CD4-positive, alpha-beta T cell (primary cell): ENCODE measurements at regions of chr19 and their contacts with region 1.

Region 1: GRCh38 chr19:14366498-14366915 is 14.7 kb upstream of the ADGRE5 start:
- DNase-seq: peak; percentile 86 to 98 (median 92)
- ATAC-seq: peak; percentile 58
- H3K4me3 ChIP-seq: peak overlapping the region; percentile 24
- H3K4me3 Mint-ChIP-seq: peak overlapping the region; percentile 82
- H3K27ac ChIP-seq: peak overlapping the region; percentile 97 to 99
- H3K27ac Mint-ChIP-seq: peak overlapping the region; percentile 84
- H3K4me1 ChIP-seq: peaks cover 95% of the 10 kb centered on the region
- H3K4me1 Mint-ChIP-seq: peaks cover 65% of the 10 kb centered on the region
- H3K27me3 ChIP-seq: no peaks in the 10 kb centered on the region
- H3K27me3 Mint-ChIP-seq: no peaks in the 10 kb centered on the region
- CTCF ChIP-seq: no peak

Region 2: DNA sequence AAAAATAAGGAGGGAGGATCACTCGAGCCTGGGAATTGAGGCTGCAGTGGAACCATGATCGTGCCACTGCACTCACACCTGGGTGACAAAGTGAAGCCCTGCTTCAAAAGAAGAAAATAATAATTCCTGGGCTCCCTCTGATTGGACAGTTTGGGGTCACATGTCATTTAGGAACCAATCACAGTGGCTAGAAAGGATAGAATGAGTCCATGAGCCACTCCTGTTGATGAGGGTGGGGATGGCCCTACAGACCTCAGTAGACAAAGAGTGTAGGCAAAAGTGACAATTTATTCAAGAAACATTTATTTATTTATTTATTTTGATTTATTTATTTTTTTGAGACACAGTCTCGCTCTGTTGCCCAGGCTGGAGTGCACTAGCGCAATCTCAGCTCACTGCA is 12.1 kb before region 1 on chr19:
- CTCF ChIA-PET with region 1: interaction called, 15 read pairs
- POLR2A ChIA-PET with region 1: interaction called, 12 read pairs
- intact Hi-C with region 1: loop called in 1 of 2 experiments (anchors 1 kb)
- DNase-seq: peak in 1 of 14 experiments; percentile 46
- ATAC-seq: no peak
- H3K4me3 ChIP-seq: no peak overlapping the region
- H3K4me3 Mint-ChIP-seq: no peak overlapping the region
- H3K27ac ChIP-seq: no peak overlapping the region
- H3K27ac Mint-ChIP-seq: peak overlapping the region; percentile 70
- H3K4me1 ChIP-seq: peaks cover 60% of the 10 kb centered on the region
- H3K4me1 Mint-ChIP-seq: peaks cover 37% of the 10 kb centered on the region
- H3K27me3 ChIP-seq: no peaks in the 10 kb centered on the region
- H3K27me3 Mint-ChIP-seq: no peaks in the 10 kb centered on the region
- CTCF ChIP-seq: no peak

Region 3: GRCh38 chr19:14383661-14384555 is 17.4 kb after region 1 on chr19:
- CTCF ChIA-PET with region 1: interaction called, 57 read pairs
- POLR2A ChIA-PET with region 1: interaction called, 240 read pairs
- intact Hi-C with region 1: loop called (anchors 1 to 2 kb)
- DNase-seq: peak in 5 of 14 experiments; percentile 46 to 84 (median 79)
- ATAC-seq: no peak
- H3K4me3 ChIP-seq: peak overlapping the region; percentile 92
- H3K4me3 Mint-ChIP-seq: peak overlapping the region; percentile 93
- H3K27ac ChIP-seq: peak overlapping the region; percentile 96 to 99
- H3K27ac Mint-ChIP-seq: peak overlapping the region; percentile 94
- H3K4me1 ChIP-seq: peaks cover 81% of the 10 kb centered on the region
- H3K4me1 Mint-ChIP-seq: peaks cover 52% of the 10 kb centered on the region
- H3K27me3 ChIP-seq: no peaks in the 10 kb centered on the region
- H3K27me3 Mint-ChIP-seq: no peaks in the 10 kb centered on the region
- CTCF ChIP-seq: no peak

Region 4: DNA sequence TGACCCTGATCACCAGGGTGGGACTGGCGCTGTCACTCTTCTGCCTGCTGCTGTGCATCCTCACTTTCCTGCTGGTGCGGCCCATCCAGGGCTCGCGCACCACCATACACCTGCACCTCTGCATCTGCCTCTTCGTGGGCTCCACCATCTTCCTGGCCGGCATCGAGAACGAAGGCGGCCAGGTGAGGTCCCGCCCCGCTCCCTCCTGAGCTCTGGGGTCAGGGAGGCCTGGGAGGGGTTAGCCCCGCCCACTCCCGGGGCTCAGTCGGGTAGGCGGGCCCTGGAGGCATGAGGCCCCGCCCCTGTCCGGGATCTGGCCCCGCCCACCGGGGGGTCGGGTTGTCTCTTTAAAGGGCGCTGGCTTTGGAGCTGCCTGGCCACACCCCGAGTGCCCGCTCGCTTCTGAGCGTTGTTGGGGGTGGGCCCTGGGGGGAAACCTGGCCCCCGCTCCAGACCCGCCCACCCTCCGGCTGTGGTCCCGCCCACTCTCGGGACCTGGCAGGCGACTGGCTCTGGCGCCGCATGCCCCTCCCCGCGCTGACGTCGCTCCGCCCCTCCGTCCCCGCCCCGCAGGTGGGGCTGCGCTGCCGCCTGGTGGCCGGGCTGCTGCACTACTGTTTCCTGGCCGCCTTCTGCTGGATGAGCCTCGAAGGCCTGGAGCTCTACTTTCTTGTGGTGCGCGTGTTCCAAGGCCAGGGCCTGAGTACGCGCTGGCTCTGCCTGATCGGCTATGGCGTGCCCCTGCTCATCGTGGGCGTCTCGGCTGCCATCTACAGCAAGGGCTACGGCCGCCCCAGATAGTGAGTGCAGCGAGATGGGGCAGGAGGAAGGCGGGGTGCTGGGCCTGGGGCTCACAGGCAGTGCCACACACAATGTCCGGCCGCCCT is 39.5 kb after region 1 on chr19:
- CTCF ChIA-PET with region 1: interaction called, 93 read pairs
- POLR2A ChIA-PET with region 1: interaction called, 33 read pairs
- intact Hi-C with region 1: loop called (anchors 1 kb)
- DNase-seq: peak; percentile 78 to 95 (median 86)
- ATAC-seq: peak; percentile 73
- H3K4me3 ChIP-seq: no peak overlapping the region
- H3K4me3 Mint-ChIP-seq: peak overlapping the region; percentile 69
- H3K27ac ChIP-seq: peak overlapping the region; percentile 22 to 56
- H3K27ac Mint-ChIP-seq: peak overlapping the region; percentile 92
- H3K4me1 ChIP-seq: peaks cover 66% of the 10 kb centered on the region
- H3K4me1 Mint-ChIP-seq: peaks cover 29% of the 10 kb centered on the region
- H3K27me3 ChIP-seq: no peaks in the 10 kb centered on the region
- H3K27me3 Mint-ChIP-seq: no peaks in the 10 kb centered on the region
- CTCF ChIP-seq: peak; percentile 85

Region 5: GRCh38 chr19:14472202-14472938 is 105.9 kb after region 1 on chr19:
- CTCF ChIA-PET with region 1: interaction called, 5 read pairs
- POLR2A ChIA-PET with region 1: no interaction called
- intact Hi-C with region 1: loop called in 1 of 2 experiments (anchors 1 kb)
- DNase-seq: peak; percentile 77 to 91 (median 86)
- ATAC-seq: peak; percentile 84
- H3K4me3 ChIP-seq: peak overlapping the region; percentile 34
- H3K4me3 Mint-ChIP-seq: peak overlapping the region; percentile 55
- H3K27ac ChIP-seq: no peak overlapping the region
- H3K27ac Mint-ChIP-seq: no peak overlapping the region
- H3K4me1 ChIP-seq: peaks cover 31% of the 10 kb centered on the region
- H3K4me1 Mint-ChIP-seq: peaks cover 36% of the 10 kb centered on the region
- H3K27me3 ChIP-seq: peaks cover 19 to 22% of the 10 kb centered on the region in 2 experiments
- H3K27me3 Mint-ChIP-seq: peaks cover 33% of the 10 kb centered on the region
- CTCF ChIP-seq: peak; percentile 98